PC-3 (cell line): ENCODE measurements at regions of chr1 and their contacts with region 1.

Region 1: DNA sequence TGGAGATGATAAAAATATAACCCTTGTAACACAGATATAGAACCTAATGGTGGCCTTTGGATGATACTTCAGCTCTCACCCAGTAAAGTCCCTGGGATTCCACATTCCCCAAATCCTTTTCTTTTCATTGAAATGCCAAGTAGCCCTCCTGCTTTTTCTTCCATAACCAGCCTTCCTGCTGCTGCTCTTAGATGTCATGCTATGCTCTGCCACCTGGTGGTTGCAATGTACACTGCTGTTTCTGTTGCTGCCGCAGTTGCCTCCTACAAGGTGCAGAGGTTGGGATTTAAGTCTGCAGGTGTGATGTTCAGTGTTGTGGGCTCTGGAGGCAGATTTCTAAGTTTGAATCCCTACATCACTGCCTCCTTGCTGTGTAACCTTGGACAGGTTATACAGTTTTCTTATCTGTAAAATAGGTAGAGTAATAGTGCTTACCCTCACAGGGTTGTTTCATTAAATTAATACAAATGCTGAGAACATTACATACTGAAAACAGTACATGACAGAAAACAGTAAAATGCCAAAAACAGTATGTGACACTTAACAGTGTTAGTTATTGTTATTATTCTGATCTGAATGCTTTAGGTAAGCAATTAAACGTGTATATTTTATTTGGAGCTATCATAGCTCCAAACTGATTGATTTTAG is 64.3 kb downstream of the CAMSAP2 start:
- DNase-seq: peak; percentile 98
- ATAC-seq: peak; percentile 100
- H3K4me3 ChIP-seq: no peak overlapping the region
- H3K27ac ChIP-seq: no peak overlapping the region
- H3K4me1 ChIP-seq: no peaks in the 10 kb centered on the region
- H3K27me3 ChIP-seq: no peaks in the 10 kb centered on the region
- CTCF ChIP-seq: peak; percentile 100

Region 2: GRCh38 chr1:200558866-200559459 is 244.0 kb before region 1 on chr1:
- CTCF ChIA-PET with region 1: interaction called, 3 read pairs
- POLR2A ChIA-PET with region 1: no interaction called
- intact Hi-C with region 1: loop called (anchors 2 kb)
- DNase-seq: peak; percentile 84
- ATAC-seq: peak; percentile 92
- H3K4me3 ChIP-seq: no peak overlapping the region
- H3K27ac ChIP-seq: no peak overlapping the region
- H3K4me1 ChIP-seq: no peaks in the 10 kb centered on the region
- H3K27me3 ChIP-seq: no peaks in the 10 kb centered on the region
- CTCF ChIP-seq: peak; percentile 99

Region 3: DNA sequence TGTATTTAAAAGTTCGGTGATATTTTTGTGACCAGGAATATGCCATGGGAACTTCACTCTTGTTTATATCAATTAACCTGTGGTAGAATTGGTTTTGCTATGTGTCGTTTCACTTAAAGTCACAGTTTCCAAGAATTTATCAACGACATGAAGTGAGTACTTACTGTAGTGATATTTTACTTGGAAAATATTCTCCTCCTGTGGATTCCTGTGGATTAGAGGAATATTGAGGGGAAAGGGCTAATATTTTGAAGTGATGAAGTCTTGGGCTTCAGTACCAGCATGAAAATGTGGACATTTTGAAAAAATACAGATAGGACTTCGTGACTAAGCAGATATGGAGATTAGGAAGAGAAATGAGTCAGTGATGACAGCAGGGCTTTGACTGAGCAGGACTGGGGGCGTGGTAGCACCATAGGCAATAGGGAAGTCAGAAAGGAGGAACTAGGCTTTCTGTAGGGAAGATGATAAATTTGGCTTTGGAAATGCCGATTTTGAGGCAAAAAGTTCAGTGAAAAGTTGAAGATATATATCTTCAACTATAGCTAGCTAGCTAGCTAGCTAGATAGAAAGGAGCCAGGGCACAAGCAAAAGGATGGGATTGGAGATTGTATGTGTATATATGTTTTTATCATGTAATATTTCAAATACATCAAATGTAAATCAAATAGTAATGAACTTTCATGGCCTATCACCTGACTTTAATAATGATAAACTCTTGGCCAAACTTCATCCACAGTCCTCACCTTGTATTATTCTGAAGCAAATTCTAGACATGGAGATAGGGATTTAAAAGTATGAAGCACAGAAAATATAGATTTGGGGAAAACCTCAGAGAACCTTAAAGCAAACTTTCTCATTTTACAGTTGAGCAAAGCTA is 163.0 kb before region 1 on chr1:
- CTCF ChIA-PET with region 1: no interaction called
- POLR2A ChIA-PET with region 1: no interaction called
- intact Hi-C with region 1: loop called (anchors 5 kb)
- DNase-seq: peak; percentile 97
- ATAC-seq: peak; percentile 100
- H3K4me3 ChIP-seq: no peak overlapping the region
- H3K27ac ChIP-seq: peak overlapping the region; percentile 81
- H3K4me1 ChIP-seq: peaks cover 20% of the 10 kb centered on the region
- H3K27me3 ChIP-seq: no peaks in the 10 kb centered on the region
- CTCF ChIP-seq: no peak

Region 4: GRCh38 chr1:200724064-200724463 is 78.9 kb before region 1 on chr1:
- CTCF ChIA-PET with region 1: no interaction called
- POLR2A ChIA-PET with region 1: no interaction called
- intact Hi-C with region 1: loop called (anchors 1 kb)
- DNase-seq: peak; percentile 95
- ATAC-seq: peak; percentile 100
- H3K4me3 ChIP-seq: no peak overlapping the region
- H3K27ac ChIP-seq: peak overlapping the region; percentile 21
- H3K4me1 ChIP-seq: peaks cover 9% of the 10 kb centered on the region
- H3K27me3 ChIP-seq: no peaks in the 10 kb centered on the region
- CTCF ChIP-seq: no peak

Region 5: DNA sequence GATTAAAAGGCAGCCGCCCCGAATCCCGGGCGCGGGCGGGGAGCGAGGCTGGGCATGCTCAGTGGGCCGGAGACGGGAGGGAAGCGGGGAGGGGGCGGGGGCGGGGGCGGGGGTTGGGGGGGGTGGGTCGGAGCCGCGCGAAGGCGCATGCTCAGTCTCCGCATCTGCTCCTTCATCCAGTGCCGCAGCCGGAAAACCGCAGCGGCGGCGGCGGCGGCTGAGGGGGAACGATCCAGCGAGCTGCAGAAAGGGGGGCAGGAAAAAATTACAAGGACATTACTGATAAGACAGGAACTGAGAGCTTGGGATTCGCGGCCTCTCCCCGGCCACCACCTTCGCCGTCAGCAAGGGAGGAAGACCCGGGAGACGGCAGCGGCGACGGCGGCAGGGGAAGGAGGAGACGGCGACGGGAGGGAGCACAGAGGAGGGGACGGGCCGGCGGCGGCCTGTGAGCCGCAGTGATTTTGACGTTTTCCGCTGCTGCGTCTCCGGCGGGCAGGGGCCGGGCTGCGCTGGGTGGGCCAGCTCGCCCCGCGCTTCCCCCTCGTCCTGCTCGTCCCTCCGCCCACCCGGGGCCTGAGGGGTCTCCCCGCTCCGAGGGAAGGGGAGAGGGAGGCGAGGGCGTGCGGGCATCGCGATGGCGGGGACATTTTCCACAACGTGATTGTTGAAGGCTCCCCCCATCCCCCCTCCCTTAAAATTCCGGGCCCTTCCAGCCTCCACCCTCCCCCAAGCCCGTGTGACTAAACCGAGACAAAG is 64.1 kb before region 1 on chr1 and contains the start of gene CAMSAP2:
- CTCF ChIA-PET with region 1: no interaction called
- POLR2A ChIA-PET with region 1: no interaction called
- intact Hi-C with region 1: loop called (anchors 2 kb)
- DNase-seq: peak; percentile 96
- ATAC-seq: peak; percentile 75
- H3K4me3 ChIP-seq: peak within 1 kb of the TSS; percentile 89
- H3K27ac ChIP-seq: peak within 1 kb of the TSS; percentile 90
- H3K4me1 ChIP-seq: peaks cover 39% of the 10 kb centered on the region
- H3K27me3 ChIP-seq: no peaks in the 10 kb centered on the region
- CTCF ChIP-seq: no peak
- total RNA-seq, gene CAMSAP2: 28.6 and 29.5 TPM in 2 replicates